ENCODE measurements at regions of chr20 and their contacts with region 1.

Region 1: DNA sequence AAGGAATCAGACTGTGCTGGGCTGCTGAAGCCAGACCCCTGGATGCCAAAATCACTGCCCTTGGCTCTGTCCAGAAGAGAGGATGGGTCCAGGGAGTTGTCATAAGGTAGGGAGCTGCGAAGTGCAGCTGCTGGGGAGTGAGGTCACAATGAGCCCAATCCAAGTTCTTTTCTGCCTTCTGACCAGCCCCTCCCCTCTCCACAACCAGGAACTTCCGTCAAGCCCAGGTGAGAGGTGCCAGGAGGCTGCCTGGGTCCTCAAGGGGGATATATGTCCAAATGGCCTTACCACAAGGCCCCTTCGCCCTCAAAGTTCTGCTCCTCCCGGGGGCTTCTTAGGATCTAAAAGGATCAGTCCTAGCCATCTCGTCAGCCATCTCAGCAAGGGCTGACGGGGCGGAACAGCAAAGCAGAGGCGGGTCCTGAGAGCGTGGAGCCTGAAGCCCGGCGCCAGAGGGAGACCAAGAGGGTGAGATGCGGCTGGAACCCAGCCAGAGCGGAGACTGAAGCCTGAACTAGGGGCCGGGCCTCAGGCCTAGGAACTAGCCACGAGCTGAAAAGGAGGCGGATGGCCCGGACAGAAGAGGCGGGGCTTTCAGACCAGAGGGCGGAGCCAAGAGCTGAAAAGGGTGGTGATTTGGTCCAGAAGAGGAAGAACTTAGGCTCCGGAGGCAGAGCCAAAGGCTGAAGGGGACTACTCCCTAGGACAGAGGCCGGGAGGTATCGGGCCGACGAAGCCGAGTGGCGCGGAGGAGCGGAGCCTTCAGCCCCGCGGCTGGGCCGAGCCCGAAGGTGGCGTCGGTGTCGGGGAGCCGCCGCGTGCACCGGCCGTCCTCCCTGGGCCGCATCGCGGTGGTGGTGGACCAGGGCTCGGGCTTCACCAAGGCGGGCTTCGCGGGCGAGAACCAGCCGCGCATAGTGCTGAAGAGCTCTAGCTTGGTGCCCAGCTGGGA is at the start of gene ACTL10:
- DNase-seq: peak; percentile 45 to 86 (median 60)
- ATAC-seq: peak; percentile 79
- H3K4me3 ChIP-seq: peak within 1 kb of the TSS; percentile 79
- H3K4me3 Mint-ChIP-seq: peak within 1 kb of the TSS; percentile 95 to 100 (median 98)
- H3K27ac ChIP-seq: peak within 1 kb of the TSS; percentile 60
- H3K27ac Mint-ChIP-seq: peak within 1 kb of the TSS; percentile 90 to 98 (median 95)
- H3K4me1 ChIP-seq: peaks cover 19 to 21% of the 10 kb centered on the region in 2 donors
- H3K4me1 Mint-ChIP-seq: peaks cover 21 to 54% (median 35%) of the 10 kb centered on the region in 7 donors
- H3K27me3 ChIP-seq: no peaks in the 10 kb centered on the region
- H3K27me3 Mint-ChIP-seq: no peaks in the 10 kb centered on the region
- total RNA-seq, gene ACTL10: 0.66 to 4.9 (median 3.2) TPM

Region 2: DNA sequence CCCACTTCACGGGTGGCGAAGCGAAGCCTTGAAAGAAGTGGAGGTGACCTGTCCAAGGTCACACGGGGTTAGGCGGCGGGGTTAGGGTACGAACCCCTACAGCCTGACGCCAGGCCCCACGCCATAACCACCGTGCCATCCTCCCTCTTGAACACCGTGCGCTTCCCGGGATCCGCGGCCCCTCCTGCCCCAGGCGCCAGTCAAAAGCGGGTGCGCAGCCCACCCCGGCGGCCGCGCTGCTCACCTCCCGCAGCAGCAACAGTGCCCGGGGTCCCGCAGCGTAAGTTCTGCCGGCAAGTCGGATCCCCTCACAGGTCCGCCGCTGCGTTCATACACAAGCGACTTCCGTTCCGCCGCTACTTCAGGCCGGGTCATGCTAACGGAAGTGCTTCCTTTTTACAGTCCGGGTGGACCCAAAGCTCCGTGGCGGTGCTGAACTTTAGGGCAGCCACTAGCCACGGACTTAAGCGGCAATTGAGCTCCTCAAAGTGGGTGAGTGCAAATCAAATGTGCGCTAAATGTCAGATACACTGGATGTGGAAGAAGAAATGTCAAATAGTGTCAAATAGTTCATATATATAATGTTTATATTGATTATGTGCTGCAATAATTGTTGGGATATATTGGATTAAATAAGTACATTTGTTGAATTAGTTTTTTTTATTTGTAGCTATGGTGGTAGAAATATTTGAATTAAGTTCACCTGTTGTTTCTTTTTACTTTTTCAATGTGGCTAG is 265.2 kb before region 1 on chr20 and contains the start of gene CDK5RAP1:
- CTCF ChIA-PET with region 1: no interaction called
- POLR2A ChIA-PET with region 1: interaction called, 5 read pairs
- intact Hi-C with region 1: loop called in 1 of 2 experiments (anchors 1 kb)
- DNase-seq: peak; percentile 62 to 84 (median 82)
- ATAC-seq: peak; percentile 98
- H3K4me3 ChIP-seq: peak within 1 kb of the TSS; percentile 93
- H3K4me3 Mint-ChIP-seq: peak within 1 kb of the TSS; percentile 92 to 99 (median 98)
- H3K27ac ChIP-seq: peak within 1 kb of the TSS; percentile 80
- H3K27ac Mint-ChIP-seq: peak within 1 kb of the TSS; percentile 89 to 94 (median 92)
- H3K4me1 ChIP-seq: peaks cover 23 to 33% of the 10 kb centered on the region in 2 donors
- H3K4me1 Mint-ChIP-seq: peaks cover 36 to 71% (median 64%) of the 10 kb centered on the region in 7 donors
- H3K27me3 ChIP-seq: no peaks in the 10 kb centered on the region
- H3K27me3 Mint-ChIP-seq: no peaks in the 10 kb centered on the region
- total RNA-seq, gene CDK5RAP1: 33.6 to 51.8 (median 49.4) TPM

Region 3: GRCh38 chr20:33460711-33461110 is 205.9 kb before region 1 on chr20:
- CTCF ChIA-PET with region 1: interaction called, 16 read pairs
- POLR2A ChIA-PET with region 1: interaction called, 4 read pairs
- intact Hi-C with region 1: loop called (anchors 1 kb)
- DNase-seq: no peak
- ATAC-seq: no peak
- H3K4me3 ChIP-seq: no peak overlapping the region
- H3K4me3 Mint-ChIP-seq: no peak overlapping the region
- H3K27ac ChIP-seq: no peak overlapping the region
- H3K27ac Mint-ChIP-seq: no peak overlapping the region
- H3K4me1 ChIP-seq: no peaks in the 10 kb centered on the region
- H3K4me1 Mint-ChIP-seq: peaks cover 0 to 4% (median 0%) of the 10 kb centered on the region in 7 donors
- H3K27me3 ChIP-seq: no peaks in the 10 kb centered on the region
- H3K27me3 Mint-ChIP-seq: no peaks in the 10 kb centered on the region

Region 4: GRCh38 chr20:33554914-33555420 is 111.6 kb before region 1 on chr20:
- CTCF ChIA-PET with region 1: interaction called, 3 read pairs
- POLR2A ChIA-PET with region 1: interaction called, 9 read pairs
- intact Hi-C with region 1: loop called (anchors 1 to 2 kb)
- DNase-seq: peak in 7 of 9 donors; percentile 72 to 92 (median 88)
- ATAC-seq: peak; percentile 98
- H3K4me3 ChIP-seq: peak overlapping the region; percentile 3
- H3K4me3 Mint-ChIP-seq: peak overlapping the region; percentile 51 to 83 (median 75)
- H3K27ac ChIP-seq: peak overlapping the region; percentile 81
- H3K27ac Mint-ChIP-seq: peak overlapping the region; percentile 90 to 98 (median 95)
- H3K4me1 ChIP-seq: peaks cover 16% of the 10 kb centered on the region in 2 donors
- H3K4me1 Mint-ChIP-seq: peaks cover 15 to 49% (median 39%) of the 10 kb centered on the region in 7 donors
- H3K27me3 ChIP-seq: no peaks in the 10 kb centered on the region
- H3K27me3 Mint-ChIP-seq: no peaks in the 10 kb centered on the region

Region 5: DNA sequence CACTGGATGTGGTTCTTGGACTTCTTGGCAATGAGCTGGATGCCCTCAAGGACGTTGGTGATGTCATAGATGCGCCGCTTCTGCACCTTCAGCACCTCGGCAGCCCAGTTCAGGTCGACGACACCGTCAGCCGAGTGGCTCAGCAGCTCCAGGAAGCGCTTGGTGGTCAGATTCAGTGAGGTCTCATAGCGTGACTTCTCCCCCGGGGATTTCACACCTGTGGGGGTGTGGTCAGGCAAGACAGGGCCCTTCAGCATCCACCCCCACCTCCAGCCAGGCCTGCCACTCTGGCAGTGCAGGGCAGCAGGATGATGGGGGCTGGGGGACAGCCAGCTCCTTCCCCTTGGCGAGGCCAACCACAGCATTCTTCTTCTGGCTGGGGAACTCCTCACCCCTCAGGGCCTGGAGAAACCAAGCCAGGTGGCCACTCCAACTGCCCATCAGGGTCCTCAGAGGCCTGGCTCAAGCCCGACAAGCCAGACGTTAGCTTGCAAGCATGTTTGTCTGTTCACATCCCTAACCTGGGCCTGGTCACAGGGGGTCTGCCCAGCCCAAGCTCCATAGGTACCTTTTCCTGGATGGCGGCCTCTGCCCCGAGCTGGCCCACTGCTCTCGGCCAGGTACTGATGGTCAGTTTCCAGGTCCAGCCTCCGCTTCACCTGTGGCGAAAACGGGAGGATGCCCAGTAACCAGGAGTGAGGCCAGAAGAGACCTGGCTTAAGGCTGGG is 13.4 kb after region 1 on chr20:
- CTCF ChIA-PET with region 1: interaction called, 33 read pairs
- POLR2A ChIA-PET with region 1: interaction called, 75 read pairs
- intact Hi-C with region 1: no loop called
- DNase-seq: no peak
- ATAC-seq: peak; percentile 59
- H3K4me3 ChIP-seq: no peak overlapping the region
- H3K4me3 Mint-ChIP-seq: peak overlapping the region in 9 of 10 donors; percentile 29 to 87 (median 72)
- H3K27ac ChIP-seq: no peak overlapping the region
- H3K27ac Mint-ChIP-seq: peak overlapping the region in 8 of 9 donors; percentile 28 to 92 (median 81)
- H3K4me1 ChIP-seq: peaks cover 13 to 33% of the 10 kb centered on the region in 2 donors
- H3K4me1 Mint-ChIP-seq: peaks cover 29 to 85% (median 44%) of the 10 kb centered on the region in 7 donors
- H3K27me3 ChIP-seq: no peaks in the 10 kb centered on the region
- H3K27me3 Mint-ChIP-seq: no peaks in the 10 kb centered on the region

Region 6: DNA sequence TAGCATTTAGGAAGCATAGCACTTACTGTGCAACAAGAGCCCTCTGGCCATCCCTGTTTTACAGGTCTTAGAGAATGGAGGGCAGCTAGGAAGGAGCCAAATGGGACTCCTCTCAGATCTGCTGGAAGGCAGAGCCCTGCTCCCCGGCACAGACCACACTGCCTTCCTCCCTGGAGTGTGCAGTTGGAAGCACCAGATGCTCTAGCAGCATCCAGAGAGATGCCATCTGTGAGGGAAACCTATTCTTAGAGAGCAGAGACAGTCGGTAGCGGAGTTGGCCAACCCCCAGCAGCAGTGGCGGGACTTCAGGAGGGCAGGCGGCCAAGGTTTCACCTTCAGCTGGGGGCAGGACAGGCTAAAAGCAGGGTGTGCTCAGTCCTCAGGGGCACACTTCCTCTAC is 36.3 kb after region 1 on chr20:
- CTCF ChIA-PET with region 1: no interaction called
- POLR2A ChIA-PET with region 1: no interaction called
- intact Hi-C with region 1: no loop called
- DNase-seq: no peak
- ATAC-seq: no peak
- H3K4me3 ChIP-seq: no peak overlapping the region
- H3K4me3 Mint-ChIP-seq: no peak overlapping the region
- H3K27ac ChIP-seq: no peak overlapping the region
- H3K27ac Mint-ChIP-seq: peak overlapping the region in 3 of 9 donors; percentile 25 to 74 (median 56)
- H3K4me1 ChIP-seq: no peaks in the 10 kb centered on the region
- H3K4me1 Mint-ChIP-seq: peaks cover 0 to 2% (median 0%) of the 10 kb centered on the region in 7 donors
- H3K27me3 ChIP-seq: no peaks in the 10 kb centered on the region
- H3K27me3 Mint-ChIP-seq: no peaks in the 10 kb centered on the region

Region 7: DNA sequence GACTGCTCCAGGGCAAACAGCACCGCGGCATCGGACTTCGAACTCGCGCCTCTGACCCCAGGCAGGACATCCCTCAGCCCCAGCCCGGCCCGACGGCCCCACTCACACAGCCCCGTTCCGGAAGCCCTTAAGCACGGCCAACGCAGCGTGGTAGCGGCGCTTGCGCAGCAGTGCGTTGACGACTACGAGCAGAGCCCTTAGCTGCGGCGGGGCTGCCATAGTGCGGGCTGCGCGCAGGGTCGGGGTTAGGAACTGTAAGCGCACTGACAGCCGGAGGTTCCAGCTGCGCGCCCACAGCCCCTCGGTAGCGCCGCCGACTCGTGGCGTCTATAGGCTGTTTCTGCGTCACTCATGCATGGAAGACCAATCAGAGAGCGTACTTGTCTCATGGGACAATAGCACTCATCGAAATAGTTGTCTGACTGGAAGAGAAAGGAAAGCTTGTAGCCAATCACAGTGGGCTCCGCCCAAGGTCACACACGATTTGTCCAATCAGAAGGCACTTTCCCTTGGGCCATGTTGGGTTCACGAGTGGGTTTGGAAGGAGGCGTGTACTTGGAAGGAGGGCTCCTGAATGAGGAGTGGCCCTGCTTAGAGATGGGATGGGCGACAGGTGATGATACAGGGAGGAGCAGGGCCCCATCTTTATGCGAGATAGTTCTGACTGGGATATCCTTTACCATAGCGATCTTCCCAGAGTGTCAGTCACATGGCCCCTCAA is 53.6 kb after region 1 on chr20 and contains the start of gene PXMP4:
- CTCF ChIA-PET with region 1: interaction called, 4 read pairs
- POLR2A ChIA-PET with region 1: interaction called, 26 read pairs
- intact Hi-C with region 1: loop called (anchors 1 kb)
- DNase-seq: peak; percentile 60 to 97 (median 94)
- ATAC-seq: peak; percentile 98
- H3K4me3 ChIP-seq: peak within 1 kb of the TSS; percentile 87
- H3K4me3 Mint-ChIP-seq: peak within 1 kb of the TSS; percentile 81 to 95 (median 90)
- H3K27ac ChIP-seq: peak within 1 kb of the TSS; percentile 74
- H3K27ac Mint-ChIP-seq: peak within 1 kb of the TSS; percentile 81 to 97 (median 87)
- H3K4me1 ChIP-seq: peaks cover 0 to 22% of the 10 kb centered on the region in 2 donors
- H3K4me1 Mint-ChIP-seq: peaks cover 22 to 36% (median 27%) of the 10 kb centered on the region in 7 donors
- H3K27me3 ChIP-seq: no peaks in the 10 kb centered on the region
- H3K27me3 Mint-ChIP-seq: no peaks in the 10 kb centered on the region
- total RNA-seq, gene PXMP4: 4.5 to 14.3 (median 10.1) TPM

Region 8: GRCh38 chr20:33915726-33916331 is 249.3 kb after region 1 on chr20:
- CTCF ChIA-PET with region 1: interaction called, 5 read pairs
- POLR2A ChIA-PET with region 1: no interaction called
- intact Hi-C with region 1: loop called in 1 of 2 experiments (anchors 5 kb)
- DNase-seq: peak in 8 of 9 donors; percentile 11 to 62 (median 30)
- ATAC-seq: peak; percentile 76
- H3K4me3 ChIP-seq: no peak overlapping the region
- H3K4me3 Mint-ChIP-seq: no peak overlapping the region
- H3K27ac ChIP-seq: no peak overlapping the region
- H3K27ac Mint-ChIP-seq: peak overlapping the region in 1 of 9 donors; percentile 25
- H3K4me1 ChIP-seq: peaks cover 0 to 4% of the 10 kb centered on the region in 2 donors
- H3K4me1 Mint-ChIP-seq: peaks cover 5 to 20% (median 15%) of the 10 kb centered on the region in 7 donors
- H3K27me3 ChIP-seq: no peaks in the 10 kb centered on the region
- H3K27me3 Mint-ChIP-seq: peaks cover 0 to 31% (median 0%) of the 10 kb centered on the region in 5 donors

Measured in naive thymus-derived CD4-positive, alpha-beta T cell (primary cell).